ENCODE measurements at regions of chr1 and their contacts with region 1.

Region 1: GRCh38 chr1:211654838-211655787 is 20.3 kb downstream of the NEK2 start:
- DNase-seq: peak; percentile 87 to 94 (median 90)
- H3K4me3 ChIP-seq: peak overlapping the region in 53 of 59 donors; percentile 3 to 57 (median 36)
- H3K27ac ChIP-seq: peak overlapping the region in 1 of 59 donors; percentile 28
- H3K27me3 ChIP-seq: no peaks in the 10 kb centered on the region
- CTCF ChIP-seq: peak; percentile 90 to 99 (median 95)

Region 2: DNA sequence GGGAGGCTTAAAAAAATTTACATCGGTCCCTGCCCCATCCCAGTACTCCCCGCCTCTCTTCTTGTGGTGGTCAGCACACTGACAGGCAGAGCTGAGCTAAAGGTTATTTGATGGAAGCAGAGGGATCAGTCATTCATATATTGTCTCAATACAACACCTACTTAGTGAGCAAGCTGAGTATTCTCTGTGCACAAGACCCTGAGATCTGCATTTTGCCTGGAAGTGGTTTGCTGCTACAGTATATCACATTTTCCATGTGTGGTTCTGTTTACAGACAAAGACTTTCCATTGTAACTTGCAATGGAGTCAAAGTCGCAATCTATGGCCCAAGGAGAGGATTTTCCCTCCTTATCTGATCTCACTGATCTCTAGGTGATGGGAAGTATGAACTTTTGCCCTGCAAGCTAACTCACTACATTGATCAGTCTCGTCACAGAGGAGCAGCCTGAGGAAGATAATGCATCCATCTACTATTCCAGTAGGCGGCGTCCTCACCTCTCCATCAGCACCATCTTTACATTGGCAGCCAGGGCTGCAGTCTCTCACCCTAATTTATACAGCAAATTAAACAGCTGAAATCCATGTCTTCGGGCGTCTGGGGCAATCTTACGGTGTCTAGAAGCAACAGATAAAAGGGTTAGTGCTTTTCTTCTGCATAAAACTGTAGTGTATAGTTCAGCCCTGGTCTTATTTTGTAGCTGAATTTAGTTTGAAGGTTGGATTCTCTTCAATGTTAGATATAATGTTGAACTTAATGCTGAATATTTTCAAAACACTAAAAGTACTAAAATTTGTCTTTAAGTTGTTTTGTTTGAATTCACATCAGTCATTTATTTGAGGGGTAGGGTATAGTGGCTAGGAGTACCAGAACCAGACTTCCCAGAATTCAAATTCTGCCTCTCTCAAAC is 331.7 kb before region 1 on chr1:
- intact Hi-C with region 1: loop called in 1 of 2 experiments (anchors 5 kb)
- DNase-seq: peak in 5 of 10 donors; percentile 32 to 70 (median 52)
- H3K4me3 ChIP-seq: no peak overlapping the region
- H3K27ac ChIP-seq: no peak overlapping the region
- H3K27me3 ChIP-seq: no peaks in the 10 kb centered on the region
- CTCF ChIP-seq: peak; percentile 28 to 77 (median 66)

Region 3: GRCh38 chr1:211469938-211470529 is 185.1 kb before region 1 on chr1:
- intact Hi-C with region 1: loop called in 1 of 2 experiments (anchors 5 kb)
- DNase-seq: peak in 9 of 10 donors; percentile 32 to 81 (median 72)
- H3K4me3 ChIP-seq: peak overlapping the region in 2 of 59 donors; percentile 2 to 24
- H3K27ac ChIP-seq: no peak overlapping the region
- H3K27me3 ChIP-seq: no peaks in the 10 kb centered on the region
- CTCF ChIP-seq: peak; percentile 44 to 85 (median 77)

Region 4: GRCh38 chr1:211501711-211502400 is 153.3 kb before region 1 on chr1:
- intact Hi-C with region 1: no loop called
- DNase-seq: no peak
- H3K4me3 ChIP-seq: no peak overlapping the region
- H3K27ac ChIP-seq: no peak overlapping the region
- H3K27me3 ChIP-seq: peaks cover 0 to 7% (median 0%) of the 10 kb centered on the region in 45 donors
- CTCF ChIP-seq: no peak

Region 5: GRCh38 chr1:211514030-211514754 is 140.9 kb before region 1 on chr1:
- intact Hi-C with region 1: loop called (anchors 2 to 5 kb)
- DNase-seq: peak; percentile 54 to 84 (median 76)
- H3K4me3 ChIP-seq: peak overlapping the region in 24 of 59 donors; percentile 18 to 51 (median 34)
- H3K27ac ChIP-seq: peak overlapping the region in 6 of 59 donors; percentile 3 to 63 (median 17)
- H3K27me3 ChIP-seq: no peaks in the 10 kb centered on the region
- CTCF ChIP-seq: peak; percentile 31 to 91 (median 76)

Region 6: DNA sequence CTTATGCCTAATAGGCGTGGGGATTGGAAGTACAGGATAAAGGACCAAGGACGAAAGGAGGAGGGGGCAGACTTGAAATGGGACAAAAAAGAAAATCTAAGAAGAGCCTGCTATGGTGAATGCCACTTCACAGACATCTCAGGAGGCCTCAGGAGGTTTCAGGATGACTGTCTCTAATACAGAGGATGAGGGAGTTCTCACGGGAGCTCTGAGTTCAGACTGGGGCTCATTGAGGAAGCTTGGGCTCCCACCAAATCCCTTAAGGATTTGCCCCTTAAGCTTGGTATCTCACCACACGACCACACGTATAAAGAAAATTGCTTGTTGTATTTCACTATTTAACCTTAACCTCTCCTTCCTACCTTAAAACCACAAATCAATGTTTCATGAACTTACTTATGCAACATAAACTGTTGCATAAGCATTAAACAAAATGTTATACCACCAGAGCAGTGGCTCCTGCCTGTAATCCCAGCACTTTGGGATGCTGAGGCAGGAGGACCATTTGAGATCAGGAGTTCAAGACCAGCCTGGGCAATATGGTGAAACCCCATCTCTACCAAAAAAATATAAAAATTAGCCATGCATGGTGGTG is 88.6 kb before region 1 on chr1:
- intact Hi-C with region 1: no loop called
- DNase-seq: no peak
- H3K4me3 ChIP-seq: no peak overlapping the region
- H3K27ac ChIP-seq: no peak overlapping the region
- H3K27me3 ChIP-seq: no peaks in the 10 kb centered on the region
- CTCF ChIP-seq: no peak

Region 7: DNA sequence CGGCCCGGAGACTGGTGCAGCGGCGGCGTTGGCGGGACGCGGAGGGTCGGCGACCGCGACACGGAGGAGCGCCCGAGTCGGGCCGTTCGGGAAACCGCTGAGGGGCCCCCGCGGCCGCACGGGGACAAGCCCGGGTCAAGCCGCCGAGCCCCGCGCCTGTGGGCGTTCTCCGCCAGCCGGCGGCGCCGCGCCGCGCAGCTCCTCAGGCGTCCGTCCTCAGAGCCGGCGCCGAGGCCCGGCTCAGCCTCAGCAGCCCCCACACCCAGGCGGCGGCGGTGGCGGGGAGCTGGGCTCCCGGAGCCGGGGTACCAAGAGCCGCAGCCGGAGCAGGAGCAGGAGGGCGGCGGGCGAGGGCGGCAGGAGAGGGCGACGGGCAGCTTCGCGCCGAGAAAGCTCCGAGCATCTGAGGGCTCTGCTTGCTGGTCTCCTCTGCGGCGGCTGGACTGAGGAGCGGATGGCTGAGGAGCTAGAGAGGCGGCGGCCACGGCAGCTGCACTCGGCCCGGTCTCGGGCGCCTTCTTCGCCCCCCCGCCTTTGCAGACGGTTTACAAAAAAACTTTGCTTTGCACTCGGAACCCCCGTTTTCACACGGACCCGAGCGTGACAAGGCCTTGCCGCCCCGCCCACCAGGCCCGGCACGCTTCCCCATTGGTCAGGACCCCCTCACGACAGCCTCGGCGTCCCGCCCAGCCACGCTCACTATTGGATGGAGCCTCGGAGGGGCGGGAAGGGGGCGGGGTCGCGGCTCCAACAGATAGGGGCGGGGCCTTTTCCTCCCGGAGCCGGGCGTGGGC is 76.3 kb before region 1 on chr1 and contains the start of gene SLC30A1:
- intact Hi-C with region 1: loop called (anchors 2 kb)
- DNase-seq: peak; percentile 99 to 100 (median 100)
- H3K4me3 ChIP-seq: peak within 1 kb of the TSS; percentile 59 to 99 (median 92)
- H3K27ac ChIP-seq: peak within 1 kb of the TSS; percentile 6 to 98 (median 92)
- H3K27me3 ChIP-seq: no peaks in the 10 kb centered on the region
- CTCF ChIP-seq: peak in 7 of 56 donors; percentile 2 to 33 (median 10)
- total RNA-seq, gene SLC30A1: 9.5 to 52.2 (median 22.1) TPM

Region 8: DNA sequence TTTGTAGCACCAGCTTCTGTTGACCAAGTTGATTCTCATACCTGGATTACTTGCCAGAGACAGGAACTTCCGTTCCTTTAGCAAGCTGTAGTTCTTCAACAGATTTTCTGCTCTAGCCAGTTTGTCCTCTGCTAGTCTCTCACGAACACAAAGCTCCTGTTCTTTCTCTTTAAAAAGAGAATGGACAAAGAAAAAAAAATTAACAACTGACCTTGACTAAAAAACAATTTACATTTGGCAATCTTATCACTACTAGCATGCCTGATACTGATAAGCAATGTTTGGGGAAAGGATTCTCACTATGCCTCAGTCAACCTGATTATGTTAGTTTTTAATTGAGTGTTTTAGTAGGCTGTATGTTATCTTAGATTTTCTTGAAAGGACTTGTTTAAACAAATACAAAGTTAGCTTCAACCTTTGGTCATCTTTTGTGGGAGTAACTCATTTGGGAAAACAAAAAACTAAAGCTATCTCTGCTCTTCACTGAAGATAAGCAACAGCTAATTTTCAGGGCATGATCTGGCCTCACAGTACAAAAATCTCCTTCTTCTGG is 12.0 kb after region 1 on chr1:
- intact Hi-C with region 1: no loop called
- DNase-seq: no peak
- H3K4me3 ChIP-seq: no peak overlapping the region
- H3K27ac ChIP-seq: no peak overlapping the region
- H3K27me3 ChIP-seq: no peaks in the 10 kb centered on the region
- CTCF ChIP-seq: no peak

Measured in dorsolateral prefrontal cortex (tissue), 120 donors.